HCT116 (cell line): ENCODE measurements at regions of chr19 and their contacts with region 1.

Region 1: DNA sequence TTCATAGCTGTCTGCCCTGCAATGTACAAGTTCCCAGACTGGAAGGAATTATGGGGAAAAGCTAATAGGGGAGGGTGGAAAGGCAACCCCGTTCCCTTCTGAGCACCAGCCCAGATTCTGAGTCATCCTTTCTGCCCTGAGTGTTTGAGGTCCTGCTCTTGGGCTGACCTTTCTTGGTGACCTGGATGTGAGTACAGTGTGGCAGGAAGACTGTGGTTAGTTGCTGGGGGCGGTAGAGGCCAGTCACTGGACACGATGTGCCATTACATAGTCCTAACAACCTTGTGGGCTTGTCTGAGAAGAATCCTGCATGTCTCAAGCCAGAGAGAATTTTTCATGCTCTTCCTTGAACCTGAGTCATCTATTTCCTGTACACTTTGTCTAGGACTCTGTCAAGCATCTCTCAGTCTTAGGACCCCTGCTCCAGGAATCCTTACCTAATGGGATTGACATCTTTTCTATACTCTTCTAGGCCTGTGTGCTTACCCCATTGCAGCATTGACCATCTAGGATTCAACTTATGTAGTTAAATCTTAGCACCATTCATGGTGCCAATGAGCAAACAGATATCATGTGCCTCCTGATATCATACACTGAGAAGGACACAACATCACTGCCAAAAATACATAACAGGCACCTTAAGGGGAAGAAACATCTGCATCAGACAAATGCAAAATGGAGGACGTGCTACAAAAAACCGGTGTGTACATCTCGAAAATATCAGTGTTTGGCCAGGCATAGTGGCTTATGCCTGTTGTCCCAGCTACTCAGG is 8.1 kb upstream of the ANGPTL4 start:
- DNase-seq: peak; percentile 70
- ATAC-seq: peak; percentile 73
- H3K4me3 ChIP-seq: peak overlapping the region in 1 of 2 experiments; percentile 6; a peak in 2 of 4 replicates
- H3K27ac ChIP-seq: peak overlapping the region; percentile 34
- H3K4me1 ChIP-seq: peaks cover 32 to 62% of the 10 kb centered on the region in 2 experiments
- H3K27me3 ChIP-seq: no peaks in the 10 kb centered on the region
- CTCF ChIP-seq: no peak
- POLR2A ChIP-seq: no peak
- RAD21 ChIP-seq: peak; percentile 54

Region 2: GRCh38 chr19:8302357-8302691 is 53.5 kb before region 1 on chr19:
- CTCF ChIA-PET with region 1: no interaction called
- POLR2A ChIA-PET with region 1: no interaction called
- RAD21 ChIA-PET with region 1: no interaction called
- intact Hi-C with region 1: no loop called
- DNase-seq: no peak
- ATAC-seq: no peak
- H3K4me3 ChIP-seq: no peak overlapping the region
- H3K27ac ChIP-seq: no peak overlapping the region
- H3K4me1 ChIP-seq: peaks cover 24 to 47% of the 10 kb centered on the region in 2 experiments
- H3K27me3 ChIP-seq: no peaks in the 10 kb centered on the region
- CTCF ChIP-seq: no peak
- POLR2A ChIP-seq: no peak
- RAD21 ChIP-seq: no peak

Region 3: DNA sequence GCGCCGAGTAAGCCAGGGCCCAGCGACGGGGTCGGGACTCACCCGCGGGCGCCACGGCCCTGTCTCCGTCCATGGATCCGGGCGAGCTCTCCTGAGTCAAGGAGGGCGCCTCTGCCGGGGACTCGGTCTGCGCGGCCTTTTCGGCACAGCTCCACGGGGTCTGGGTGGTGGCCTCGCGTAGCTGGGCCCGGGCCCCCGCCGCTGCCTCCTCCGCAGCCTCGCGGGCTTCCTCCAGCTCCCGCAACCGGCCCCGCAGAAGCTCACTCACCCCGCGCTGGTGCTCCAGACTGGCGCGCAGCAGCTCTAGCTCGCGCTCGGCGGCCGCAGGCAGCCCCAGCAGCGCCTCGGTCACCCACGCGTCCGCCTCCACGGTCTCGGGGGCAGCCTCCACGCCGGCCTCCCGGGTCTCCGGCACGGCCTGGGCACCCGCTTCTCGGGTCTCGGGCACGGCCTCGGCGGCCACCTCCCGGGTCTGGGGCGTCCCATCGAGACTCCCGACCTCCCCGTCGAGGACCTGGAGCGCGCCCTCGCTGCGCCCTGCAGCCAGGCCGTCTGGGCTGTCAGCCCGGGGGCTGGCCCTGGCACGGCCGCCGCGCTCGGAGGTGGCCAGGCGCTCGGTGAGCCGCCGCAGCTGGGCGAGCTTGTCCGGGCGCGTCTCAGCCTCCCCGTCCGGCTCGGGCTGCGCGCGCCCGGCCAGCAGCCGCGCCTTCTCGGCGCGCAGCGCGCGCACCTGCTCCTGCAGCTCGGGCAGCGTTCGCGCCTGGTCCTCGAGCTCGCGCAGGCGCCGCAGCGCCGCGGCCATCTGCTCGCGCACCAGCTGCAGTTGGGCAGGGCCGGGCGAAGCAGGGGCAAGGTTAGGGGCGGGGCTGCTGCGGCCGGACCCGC is 21.1 kb before region 1 on chr19:
- CTCF ChIA-PET with region 1: interaction called, 10 read pairs
- POLR2A ChIA-PET with region 1: interaction called, 3 read pairs
- RAD21 ChIA-PET with region 1: no interaction called
- intact Hi-C with region 1: no loop called
- DNase-seq: peak; percentile 82
- ATAC-seq: peak; percentile 83
- H3K4me3 ChIP-seq: peak overlapping the region; percentile 71 to 82
- H3K27ac ChIP-seq: peak overlapping the region; percentile 100
- H3K4me1 ChIP-seq: peaks cover 18 to 31% of the 10 kb centered on the region in 2 experiments
- H3K27me3 ChIP-seq: no peaks in the 10 kb centered on the region
- CTCF ChIP-seq: no peak
- POLR2A ChIP-seq: peak; percentile 56
- RAD21 ChIP-seq: no peak

Region 4: DNA sequence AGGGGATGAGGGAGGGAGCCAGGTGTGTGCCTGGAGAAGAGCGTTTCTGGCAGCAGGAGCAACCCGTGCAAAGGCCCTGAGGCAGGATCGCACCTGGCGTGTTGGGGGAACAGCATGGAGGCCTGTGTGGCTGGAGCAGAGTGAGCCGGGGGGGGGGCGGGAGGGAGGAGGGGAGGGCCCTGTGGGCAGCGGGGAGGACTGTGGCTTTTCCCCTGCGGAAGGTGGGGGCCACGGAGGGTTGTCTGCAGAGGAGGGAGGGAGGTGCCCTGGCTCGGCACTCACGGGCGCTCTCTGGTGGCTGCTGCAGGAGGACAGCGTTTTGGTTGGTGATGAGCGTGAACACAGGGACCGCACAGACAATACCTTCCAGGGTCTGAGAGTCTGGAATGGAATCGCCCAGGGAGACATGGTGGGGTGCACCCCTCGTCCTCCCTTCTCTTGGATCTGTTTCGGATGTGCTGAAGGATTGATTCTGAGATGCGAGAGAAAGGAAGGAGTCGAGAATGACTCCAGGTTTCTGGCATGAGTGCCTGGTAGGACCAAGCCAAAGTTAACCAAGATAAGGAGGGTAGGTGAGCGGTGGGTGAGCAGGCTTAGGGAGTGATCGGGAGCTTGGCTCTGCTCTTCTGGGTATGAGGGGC is 40.9 kb after region 1 on chr19:
- CTCF ChIA-PET with region 1: interaction called, 7 read pairs
- POLR2A ChIA-PET with region 1: interaction called, 4 read pairs
- RAD21 ChIA-PET with region 1: no interaction called
- intact Hi-C with region 1: loop called (anchors 1 kb)
- DNase-seq: no peak
- ATAC-seq: peak; percentile 97
- H3K4me3 ChIP-seq: no peak overlapping the region
- H3K27ac ChIP-seq: peak overlapping the region; percentile 29; the same call in 1 of the 2 replicates
- H3K4me1 ChIP-seq: peaks cover 3 to 15% of the 10 kb centered on the region in 2 experiments; a peak in 2 of 4 replicates
- H3K27me3 ChIP-seq: no peaks in the 10 kb centered on the region
- CTCF ChIP-seq: peak in 2 of 3 experiments; percentile 75 to 86; a peak in 5 of 6 replicates
- POLR2A ChIP-seq: no peak
- RAD21 ChIP-seq: no peak; the same call in none of the 2 replicates

Region 5: DNA sequence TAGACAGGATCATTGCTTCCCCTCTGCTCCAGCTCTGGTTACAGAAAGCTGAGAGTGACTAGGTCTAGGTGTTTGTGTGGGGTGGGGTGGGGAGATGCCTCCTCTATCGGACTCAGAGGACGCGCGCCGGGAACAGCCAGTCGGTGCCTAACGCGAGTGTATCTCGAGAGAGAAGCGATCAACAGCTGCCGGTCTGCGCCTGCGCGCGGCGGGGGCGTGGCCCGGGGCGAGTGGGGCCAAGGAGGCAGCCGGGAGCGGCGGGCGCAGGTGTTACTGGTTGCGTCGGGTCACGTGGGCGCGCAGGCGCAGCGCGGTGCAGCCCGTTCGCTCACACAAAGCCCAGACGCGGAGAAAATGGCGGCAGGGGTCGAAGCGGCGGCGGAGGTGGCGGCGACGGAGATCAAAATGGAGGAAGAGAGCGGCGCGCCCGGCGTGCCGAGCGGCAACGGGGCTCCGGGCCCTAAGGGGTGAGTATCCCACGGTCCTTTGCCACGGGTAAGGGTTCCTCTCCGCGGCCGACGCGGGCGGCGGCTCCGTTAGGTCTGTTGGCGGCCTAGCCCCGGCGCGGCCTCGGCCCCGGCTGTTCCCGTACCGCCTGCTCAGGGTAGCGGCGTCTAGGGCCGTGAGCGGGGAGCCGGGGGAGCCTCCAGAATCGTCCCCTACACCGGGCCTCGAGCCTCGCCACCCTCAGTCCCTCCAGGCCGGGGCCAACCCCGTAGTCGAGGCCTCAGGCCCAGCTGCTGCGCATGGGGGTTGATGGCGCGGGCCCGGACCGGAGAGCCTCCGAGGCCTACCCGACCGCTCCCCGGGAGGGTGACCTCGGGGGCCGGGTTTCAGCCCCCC is 89.0 kb after region 1 on chr19 and contains the start of gene HNRNPM:
- CTCF ChIA-PET with region 1: interaction called, 3 read pairs
- POLR2A ChIA-PET with region 1: no interaction called
- RAD21 ChIA-PET with region 1: no interaction called
- intact Hi-C with region 1: loop called (anchors 10 kb)
- DNase-seq: peak; percentile 88
- ATAC-seq: peak; percentile 94
- H3K4me3 ChIP-seq: peak within 1 kb of the TSS; percentile 65 to 78
- H3K27ac ChIP-seq: peak within 1 kb of the TSS; percentile 98
- H3K4me1 ChIP-seq: peaks cover 22 to 46% of the 10 kb centered on the region in 2 experiments
- H3K27me3 ChIP-seq: no peaks in the 10 kb centered on the region
- CTCF ChIP-seq: no peak
- POLR2A ChIP-seq: peak; percentile 94
- RAD21 ChIP-seq: no peak
- total RNA-seq, gene HNRNPM: 298 TPM

Region 6: DNA sequence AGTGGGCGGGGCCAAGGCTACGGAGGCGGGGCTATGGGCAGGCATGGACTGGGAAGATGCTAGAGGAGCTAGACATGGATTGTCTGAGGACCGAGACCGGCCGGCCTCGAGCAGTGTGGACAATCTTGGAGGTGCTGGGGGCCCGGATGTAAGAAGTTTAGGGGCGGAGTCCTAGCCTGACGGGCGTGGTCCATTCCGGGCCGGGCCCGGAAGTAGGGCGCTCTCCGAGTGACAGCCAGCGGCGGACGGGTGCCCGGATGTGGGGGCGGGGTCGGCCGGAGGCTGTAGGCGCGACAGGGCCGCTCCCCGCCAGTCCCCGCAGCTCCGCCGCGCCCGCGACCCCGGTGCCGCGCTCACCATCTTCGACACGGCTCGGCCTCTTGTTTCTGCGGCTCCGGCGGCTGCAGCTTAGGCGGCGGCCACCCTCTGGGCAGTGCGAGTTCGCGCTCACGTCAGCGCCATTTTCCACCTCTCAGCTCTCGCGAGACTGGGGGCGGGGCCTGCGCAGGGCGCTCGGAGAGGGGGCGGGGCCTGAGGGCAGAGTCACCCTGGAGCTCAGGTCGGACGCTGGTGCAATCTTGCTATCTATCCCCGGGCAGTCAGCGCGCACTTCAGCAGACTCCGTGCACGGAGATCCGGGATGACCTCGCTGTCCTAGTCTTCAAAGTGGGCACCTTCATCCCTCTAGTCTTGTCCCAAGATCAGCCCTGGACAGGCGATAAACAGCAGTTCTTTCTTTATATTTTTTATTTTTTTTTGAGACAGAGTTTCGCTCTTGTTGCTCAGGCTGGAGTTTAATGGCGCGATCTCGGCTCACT is 158.1 kb after region 1 on chr19 and contains the start of gene ZNF414:
- CTCF ChIA-PET with region 1: interaction called, 4 read pairs
- POLR2A ChIA-PET with region 1: interaction called, 12 read pairs
- RAD21 ChIA-PET with region 1: no interaction called
- intact Hi-C with region 1: no loop called
- DNase-seq: peak; percentile 97
- ATAC-seq: peak; percentile 85
- H3K4me3 ChIP-seq: peak within 1 kb of the TSS; percentile 59 to 78
- H3K27ac ChIP-seq: peak within 1 kb of the TSS; percentile 95
- H3K4me1 ChIP-seq: peaks cover 21 to 41% of the 10 kb centered on the region in 2 experiments
- H3K27me3 ChIP-seq: no peaks in the 10 kb centered on the region
- CTCF ChIP-seq: no peak
- POLR2A ChIP-seq: peak; percentile 94
- RAD21 ChIP-seq: no peak
- total RNA-seq, gene ZNF414: 31.9 TPM

Region 7: DNA sequence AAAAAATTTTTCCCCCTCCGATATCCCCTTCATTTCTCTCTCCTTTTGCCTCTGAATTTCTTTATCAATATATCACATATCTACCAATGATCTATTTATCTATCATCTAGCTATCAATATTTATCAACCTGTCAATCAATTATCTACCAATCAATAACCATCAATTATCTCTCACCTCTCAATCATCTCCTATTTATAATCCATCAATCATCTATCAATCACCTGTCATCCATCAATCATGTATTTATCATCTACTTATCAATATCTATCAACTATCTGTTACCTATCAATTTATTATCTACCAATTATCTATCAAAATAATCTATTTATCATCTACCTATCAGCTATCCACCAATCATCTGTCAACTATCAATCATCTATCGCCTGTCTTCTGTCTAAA is 493.4 kb after region 1 on chr19:
- CTCF ChIA-PET with region 1: no interaction called
- POLR2A ChIA-PET with region 1: no interaction called
- RAD21 ChIA-PET with region 1: no interaction called
- intact Hi-C with region 1: no loop called
- DNase-seq: no peak
- ATAC-seq: no peak
- H3K4me3 ChIP-seq: no peak overlapping the region
- H3K27ac ChIP-seq: no peak overlapping the region
- H3K4me1 ChIP-seq: no peaks in the 10 kb centered on the region
- H3K27me3 ChIP-seq: no peaks in the 10 kb centered on the region
- CTCF ChIP-seq: no peak
- POLR2A ChIP-seq: no peak
- RAD21 ChIP-seq: no peak